ENCODE measurements at regions of chr4 and their contacts with region 1.

Region 1: GRCh38 chr4:6942238-6942800 is 32.7 kb downstream of the TBC1D14 start:
- DNase-seq: peak; percentile 39
- H3K4me3 Mint-ChIP-seq: peak overlapping the region; percentile 61
- H3K27ac Mint-ChIP-seq: peak overlapping the region; percentile 85
- H3K4me1 Mint-ChIP-seq: peaks cover 53% of the 10 kb centered on the region
- H3K27me3 Mint-ChIP-seq: no peaks in the 10 kb centered on the region

Region 2: GRCh38 chr4:6917461-6918271 is 24.7 kb before region 1 on chr4:
- intact Hi-C with region 1: loop called (anchors 2 kb)
- DNase-seq: no peak
- H3K4me3 Mint-ChIP-seq: peak overlapping the region; percentile 71
- H3K27ac Mint-ChIP-seq: peak overlapping the region; percentile 88
- H3K4me1 Mint-ChIP-seq: peaks cover 67% of the 10 kb centered on the region
- H3K27me3 Mint-ChIP-seq: peaks cover 2% of the 10 kb centered on the region

Region 3: GRCh38 chr4:6926681-6927478 is 15.4 kb before region 1 on chr4:
- intact Hi-C with region 1: loop called (anchors 1 kb)
- DNase-seq: peak; percentile 43
- H3K4me3 Mint-ChIP-seq: peak overlapping the region; percentile 72
- H3K27ac Mint-ChIP-seq: peak overlapping the region; percentile 63
- H3K4me1 Mint-ChIP-seq: peaks cover 80% of the 10 kb centered on the region
- H3K27me3 Mint-ChIP-seq: no peaks in the 10 kb centered on the region